ENCODE measurements at regions of chr9 and their contacts with region 1.

Region 1: GRCh38 chr9:4077499-4078102 is 222.3 kb downstream of the GLIS3 start:
- DNase-seq: peak; percentile 76
- H3K4me3 ChIP-seq: no peak overlapping the region
- H3K27ac ChIP-seq: no peak overlapping the region
- H3K4me1 ChIP-seq: peaks cover 2% of the 10 kb centered on the region
- H3K27me3 ChIP-seq: no peaks in the 10 kb centered on the region
- CTCF ChIP-seq: peak; percentile 83 to 85
- POLR2A ChIP-seq: no peak

Region 2: DNA sequence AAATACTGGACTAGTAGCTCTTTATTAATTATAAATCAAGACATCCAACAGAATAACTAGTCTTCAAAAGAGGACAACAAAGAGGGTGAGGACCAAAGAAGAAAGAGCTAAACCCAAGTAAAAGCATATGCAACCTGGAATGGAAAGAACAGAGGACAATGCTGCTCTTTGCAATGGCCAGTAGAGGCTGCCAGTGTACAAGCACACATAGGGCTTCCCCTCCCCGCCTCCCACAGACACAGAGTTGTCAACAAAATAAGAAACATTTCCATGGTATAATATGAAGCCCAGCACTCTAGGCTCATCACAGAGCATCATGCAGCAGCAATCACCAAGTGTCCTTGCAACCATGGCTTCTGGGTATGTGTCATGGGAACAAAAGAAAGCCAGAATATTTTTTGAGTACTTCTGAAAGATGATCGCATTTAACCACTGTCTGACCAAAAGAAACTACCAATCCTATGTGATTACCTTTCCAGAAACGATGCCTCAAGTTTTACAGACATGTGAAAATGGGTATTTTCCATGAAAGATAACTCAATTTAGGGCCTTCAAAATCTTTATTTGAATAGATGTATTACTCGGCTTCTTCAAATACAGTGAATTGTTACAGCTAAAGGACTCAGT is 609.9 kb before region 1 on chr9:
- CTCF ChIA-PET with region 1: interaction called, 6 read pairs
- POLR2A ChIA-PET with region 1: no interaction called
- dilution Hi-C with region 1: no loop called
- intact Hi-C with region 1: loop called (anchors 5 kb)
- DNase-seq: peak; percentile 66
- H3K4me3 ChIP-seq: no peak overlapping the region
- H3K27ac ChIP-seq: no peak overlapping the region
- H3K4me1 ChIP-seq: peaks cover 13% of the 10 kb centered on the region
- H3K27me3 ChIP-seq: no peaks in the 10 kb centered on the region
- CTCF ChIP-seq: peak; percentile 94
- POLR2A ChIP-seq: no peak

Region 3: DNA sequence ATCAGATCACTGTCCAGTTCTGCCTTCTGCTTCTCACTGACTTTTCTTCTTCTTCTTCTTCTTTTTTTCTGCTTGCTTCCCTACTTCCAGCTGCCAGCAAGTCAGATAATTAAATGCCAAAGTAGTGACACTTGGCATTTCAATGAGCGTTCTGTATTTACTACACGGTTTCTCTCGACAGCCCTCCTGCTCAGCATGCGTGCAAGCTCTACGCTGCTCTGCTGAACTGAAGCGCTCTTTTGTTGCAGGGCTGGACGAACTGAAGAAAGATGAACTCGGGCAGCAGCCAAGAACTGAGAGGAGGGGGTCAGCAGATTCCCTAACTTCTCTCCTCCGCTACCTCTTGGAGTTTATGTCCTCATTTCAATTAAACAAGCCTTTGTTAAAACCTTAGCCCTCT is 96.8 kb before region 1 on chr9:
- CTCF ChIA-PET with region 1: no interaction called
- POLR2A ChIA-PET with region 1: no interaction called
- dilution Hi-C with region 1: no loop called
- intact Hi-C with region 1: no loop called
- DNase-seq: no peak
- H3K4me3 ChIP-seq: no peak overlapping the region
- H3K27ac ChIP-seq: no peak overlapping the region
- H3K4me1 ChIP-seq: no peaks in the 10 kb centered on the region
- H3K27me3 ChIP-seq: no peaks in the 10 kb centered on the region
- CTCF ChIP-seq: no peak
- POLR2A ChIP-seq: no peak

Region 4: DNA sequence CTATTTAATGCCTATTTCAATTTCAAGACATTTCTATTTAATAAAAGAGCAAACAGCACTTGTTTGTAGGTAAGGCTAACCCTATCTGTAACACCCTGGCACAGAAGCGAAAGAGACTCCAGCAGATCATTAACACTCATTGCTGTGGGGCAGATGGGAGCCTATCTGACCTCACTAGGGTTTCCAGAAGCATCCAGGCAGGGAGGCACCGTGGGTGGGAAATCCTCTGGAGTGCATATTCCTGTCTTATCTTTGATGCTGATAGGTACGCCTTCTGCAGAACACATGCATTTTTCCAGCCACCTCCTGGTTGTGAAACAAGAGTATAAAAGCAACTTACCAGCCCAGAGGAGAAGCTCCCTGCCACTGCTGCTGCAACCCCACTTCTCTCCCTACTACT is 11.5 kb before region 1 on chr9:
- CTCF ChIA-PET with region 1: interaction called, 17 read pairs
- POLR2A ChIA-PET with region 1: no interaction called
- dilution Hi-C with region 1: no loop called
- intact Hi-C with region 1: no loop called
- DNase-seq: no peak
- H3K4me3 ChIP-seq: no peak overlapping the region
- H3K27ac ChIP-seq: no peak overlapping the region
- H3K4me1 ChIP-seq: no peaks in the 10 kb centered on the region
- H3K27me3 ChIP-seq: no peaks in the 10 kb centered on the region
- CTCF ChIP-seq: no peak
- POLR2A ChIP-seq: no peak

Region 5: GRCh38 chr9:4197548-4197947 is 119.9 kb after region 1 on chr9:
- CTCF ChIA-PET with region 1: interaction called, 18 read pairs
- POLR2A ChIA-PET with region 1: no interaction called
- dilution Hi-C with region 1: no loop called
- intact Hi-C with region 1: loop called (anchors 1 kb)
- DNase-seq: no peak
- H3K4me3 ChIP-seq: no peak overlapping the region
- H3K27ac ChIP-seq: no peak overlapping the region
- H3K4me1 ChIP-seq: no peaks in the 10 kb centered on the region
- H3K27me3 ChIP-seq: peaks cover 0 to 3% of the 10 kb centered on the region in 2 experiments
- CTCF ChIP-seq: peak; percentile 53 to 60
- POLR2A ChIP-seq: no peak

Region 6: GRCh38 chr9:4315582-4316215 is 238.1 kb after region 1 on chr9:
- CTCF ChIA-PET with region 1: interaction called, 16 read pairs
- POLR2A ChIA-PET with region 1: no interaction called
- dilution Hi-C with region 1: no loop called
- intact Hi-C with region 1: no loop called
- DNase-seq: peak; percentile 85
- H3K4me3 ChIP-seq: no peak overlapping the region
- H3K27ac ChIP-seq: no peak overlapping the region
- H3K4me1 ChIP-seq: peaks cover 4% of the 10 kb centered on the region
- H3K27me3 ChIP-seq: no peaks in the 10 kb centered on the region
- CTCF ChIP-seq: peak; percentile 89 to 93
- POLR2A ChIP-seq: no peak

Region 7: DNA sequence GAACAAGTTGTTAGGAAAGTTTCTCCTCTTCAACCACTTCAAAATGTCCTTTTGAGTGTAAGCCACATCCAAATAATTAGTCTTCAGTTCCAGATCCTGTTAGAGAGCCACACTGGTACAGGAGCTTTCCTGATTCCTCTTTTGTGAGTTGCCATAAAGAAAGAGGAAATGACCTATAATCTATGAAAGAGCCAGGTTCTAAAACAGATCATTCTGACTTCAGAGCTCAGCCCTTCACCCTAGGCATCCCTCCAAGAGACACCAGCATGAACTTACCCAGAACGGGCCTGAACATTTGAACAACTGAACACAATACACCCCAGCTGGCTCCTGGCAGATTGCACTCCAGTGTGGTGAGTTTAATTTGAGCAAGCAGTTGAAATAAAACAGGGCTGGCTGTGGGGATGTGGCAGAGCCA is 438.4 kb after region 1 on chr9:
- CTCF ChIA-PET with region 1: no interaction called
- POLR2A ChIA-PET with region 1: no interaction called
- dilution Hi-C with region 1: no loop called
- intact Hi-C with region 1: no loop called
- DNase-seq: no peak
- H3K4me3 ChIP-seq: no peak overlapping the region
- H3K27ac ChIP-seq: no peak overlapping the region
- H3K4me1 ChIP-seq: no peaks in the 10 kb centered on the region
- H3K27me3 ChIP-seq: no peaks in the 10 kb centered on the region
- CTCF ChIP-seq: no peak
- POLR2A ChIP-seq: no peak